ENCODE measurements at regions of chr6 and their contacts with region 1.

Region 1: DNA sequence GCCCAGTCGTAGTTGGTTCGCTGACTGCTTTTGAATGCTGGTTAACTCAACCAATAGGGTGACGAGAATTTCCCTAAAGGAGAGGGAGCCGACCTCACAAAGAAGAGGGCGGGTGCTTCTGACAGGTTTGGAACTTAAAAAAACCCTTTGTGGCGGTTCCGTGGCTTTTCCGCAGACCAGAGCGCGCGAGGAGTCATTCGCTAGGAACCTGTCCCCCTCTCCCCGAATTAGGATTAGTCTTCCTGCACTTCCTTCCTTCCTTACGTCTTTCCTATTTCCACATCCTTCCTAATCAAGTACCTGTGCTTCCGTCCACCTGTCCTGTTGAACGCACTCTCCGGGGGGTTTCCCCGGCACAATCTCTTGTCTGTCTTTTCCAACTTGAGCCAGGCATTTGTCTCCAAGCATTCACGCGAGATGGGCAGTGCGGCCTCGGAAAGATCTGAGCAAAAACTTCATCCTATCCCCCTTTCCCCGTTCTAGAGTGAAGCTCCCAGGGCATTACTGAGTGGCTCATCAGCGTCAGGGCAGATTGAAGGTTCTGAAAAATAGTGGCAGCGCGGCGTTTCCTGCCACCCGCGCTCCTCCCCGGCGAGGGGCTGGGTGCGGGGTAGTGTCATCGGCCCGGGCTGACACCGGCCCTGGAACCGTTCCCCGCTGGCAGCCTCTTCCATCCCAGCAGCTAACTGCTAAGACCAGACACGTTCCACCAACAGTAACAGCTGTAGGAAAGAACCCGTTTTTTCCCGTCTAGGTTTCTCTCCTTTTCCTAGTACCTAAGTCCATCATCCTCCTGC is 1.5 kb upstream of the STXBP5 start:
- DNase-seq: peak; percentile 87
- ATAC-seq: peak; percentile 88
- H3K4me3 Mint-ChIP-seq: peak overlapping the region; percentile 87
- H3K27ac Mint-ChIP-seq: peak overlapping the region; percentile 98
- H3K4me1 Mint-ChIP-seq: peaks cover 24% of the 10 kb centered on the region
- H3K27me3 Mint-ChIP-seq: no peaks in the 10 kb centered on the region

Region 2: DNA sequence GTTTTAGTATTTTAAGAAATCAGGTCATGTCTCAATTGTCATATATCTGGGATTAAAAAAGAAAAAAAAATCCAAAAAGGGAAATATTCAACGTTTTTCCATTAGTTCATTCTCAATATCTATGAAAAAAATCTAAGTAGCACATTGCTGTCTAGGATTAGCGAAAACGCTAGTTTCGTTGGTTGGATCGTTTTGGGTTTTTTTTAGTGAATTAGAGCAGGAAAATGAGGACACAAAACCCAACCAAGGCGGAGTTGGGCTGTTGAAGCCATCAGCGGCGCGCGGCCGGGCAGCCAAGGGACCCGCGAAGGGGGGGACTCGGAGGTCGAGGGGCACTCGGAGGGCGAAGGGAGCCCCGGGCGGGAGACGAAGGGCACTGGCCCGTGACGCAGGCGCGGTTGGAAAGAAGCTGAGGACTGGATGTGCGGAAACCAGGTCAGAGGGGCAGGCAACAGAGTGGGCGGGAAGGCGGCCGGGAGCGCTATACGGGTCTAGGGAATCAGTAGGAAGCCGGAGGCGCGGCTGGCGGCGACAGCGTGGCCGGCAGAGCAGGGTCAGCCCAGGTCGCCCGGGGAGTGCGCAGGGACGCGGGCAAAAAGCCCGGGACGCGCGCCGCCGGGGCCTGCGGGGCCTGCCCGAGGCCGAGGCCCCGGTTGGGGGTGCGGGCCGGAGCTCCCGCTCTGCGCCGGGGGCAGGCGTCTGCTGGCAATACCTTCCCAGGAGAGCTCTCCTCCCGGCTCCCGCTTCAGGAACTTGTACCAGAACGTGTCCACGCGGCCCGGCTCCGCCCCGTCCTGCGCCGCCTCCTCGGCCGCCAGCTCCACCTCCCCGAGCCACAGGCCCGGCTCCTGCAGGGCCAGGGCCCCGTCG is 1468.0 kb before region 1 on chr6:
- CTCF ChIA-PET with region 1: no interaction called
- POLR2A ChIA-PET with region 1: no interaction called
- intact Hi-C with region 1: loop called in 1 of 2 experiments (anchors 2 kb)
- DNase-seq: peak; percentile 82
- ATAC-seq: peak; percentile 70
- H3K4me3 Mint-ChIP-seq: peak overlapping the region; percentile 88
- H3K27ac Mint-ChIP-seq: peak overlapping the region; percentile 95
- H3K4me1 Mint-ChIP-seq: peaks cover 24% of the 10 kb centered on the region
- H3K27me3 Mint-ChIP-seq: no peaks in the 10 kb centered on the region

Region 3: DNA sequence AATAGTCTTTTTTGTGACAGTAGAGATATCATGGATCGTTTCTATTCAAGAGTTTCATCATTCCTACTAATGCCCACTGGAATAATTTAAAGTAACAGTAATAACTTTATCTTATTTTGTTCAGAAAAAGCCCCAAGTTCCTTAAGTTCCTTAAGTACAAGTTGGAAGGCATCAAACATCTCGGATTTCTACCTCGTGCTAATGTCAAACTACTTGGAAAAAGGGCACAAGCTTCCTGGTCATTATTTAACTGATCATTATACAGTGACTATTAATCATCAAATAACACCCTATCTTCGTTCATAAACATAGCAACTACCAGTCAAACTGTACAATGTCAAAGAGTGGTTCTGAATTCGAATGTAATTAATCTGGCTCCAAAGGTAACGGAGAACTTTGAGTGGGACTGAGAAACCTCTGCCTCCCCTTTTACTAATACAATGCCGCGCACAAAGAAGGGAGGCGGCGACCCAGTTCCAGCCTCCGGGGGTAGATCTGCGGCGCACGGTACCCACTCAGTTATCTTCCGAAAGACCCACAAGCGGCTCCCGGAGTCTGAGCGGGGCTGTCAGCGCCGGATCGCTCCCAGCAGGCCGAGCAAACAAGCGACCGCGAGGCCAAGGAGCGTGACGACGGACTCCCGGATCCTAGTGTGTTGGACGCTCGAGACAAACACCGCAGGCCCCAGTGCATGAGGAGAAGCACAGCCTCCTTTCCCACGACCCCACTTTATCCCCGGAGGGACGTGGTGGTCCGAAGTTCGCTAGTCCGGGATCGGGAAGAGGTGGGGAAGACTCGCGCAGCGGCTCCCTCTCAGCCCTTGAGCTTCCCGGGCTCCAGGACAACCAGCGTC is 1239.3 kb before region 1 on chr6:
- CTCF ChIA-PET with region 1: no interaction called
- POLR2A ChIA-PET with region 1: no interaction called
- intact Hi-C with region 1: loop called (anchors 2 to 5 kb)
- DNase-seq: peak; percentile 67
- ATAC-seq: peak; percentile 34
- H3K4me3 Mint-ChIP-seq: peak overlapping the region; percentile 94
- H3K27ac Mint-ChIP-seq: peak overlapping the region; percentile 88
- H3K4me1 Mint-ChIP-seq: peaks cover 44% of the 10 kb centered on the region
- H3K27me3 Mint-ChIP-seq: no peaks in the 10 kb centered on the region

Region 4: DNA sequence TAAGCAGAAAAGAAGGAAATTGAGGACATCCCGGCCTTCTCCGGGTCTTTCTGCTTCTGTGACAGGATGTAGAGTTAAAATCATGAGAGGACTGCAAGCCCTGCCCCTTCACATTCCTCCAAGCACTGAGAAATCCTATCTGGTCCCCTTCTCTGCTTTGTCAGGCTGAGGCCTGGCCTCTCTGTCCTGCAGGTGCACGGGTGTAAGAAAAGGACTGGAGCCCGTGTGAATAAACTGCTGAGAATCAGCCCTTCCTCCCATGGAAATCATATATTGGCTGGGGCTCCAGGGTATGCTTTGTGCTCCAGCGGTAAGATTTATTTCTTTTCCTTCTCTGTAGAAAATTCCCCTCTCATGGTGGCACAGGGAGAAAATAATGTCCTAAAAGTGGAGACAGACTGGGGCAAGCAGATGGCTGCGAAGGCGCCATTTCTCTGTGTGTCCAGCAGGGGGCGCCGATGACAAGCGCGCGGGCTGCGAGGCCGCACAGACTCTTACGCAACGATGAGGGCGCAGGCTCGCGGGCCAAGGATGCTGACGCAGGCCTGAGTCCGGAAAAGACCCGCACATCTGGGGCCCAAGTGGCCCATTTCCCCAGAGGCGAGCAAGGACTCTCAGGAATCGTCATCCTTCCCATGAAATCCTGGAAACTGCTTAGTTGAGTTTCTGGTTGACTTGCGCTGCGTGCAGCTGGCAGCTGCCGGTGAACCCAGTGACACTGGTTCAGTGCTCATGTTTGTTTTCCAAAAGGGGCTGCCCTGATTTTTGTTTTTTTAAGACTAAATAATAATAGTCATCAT is 345.3 kb before region 1 on chr6:
- CTCF ChIA-PET with region 1: interaction called, 3 read pairs
- POLR2A ChIA-PET with region 1: interaction called, 3 read pairs
- intact Hi-C with region 1: loop called (anchors 2 kb)
- DNase-seq: peak; percentile 89
- ATAC-seq: peak; percentile 56
- H3K4me3 Mint-ChIP-seq: peak overlapping the region; percentile 32
- H3K27ac Mint-ChIP-seq: peak overlapping the region; percentile 66
- H3K4me1 Mint-ChIP-seq: peaks cover 38% of the 10 kb centered on the region
- H3K27me3 Mint-ChIP-seq: peaks cover 2% of the 10 kb centered on the region

Region 5: GRCh38 chr6:146884728-146885127 is 318.0 kb before region 1 on chr6:
- CTCF ChIA-PET with region 1: no interaction called
- POLR2A ChIA-PET with region 1: no interaction called
- intact Hi-C with region 1: no loop called
- DNase-seq: no peak
- ATAC-seq: no peak
- H3K4me3 Mint-ChIP-seq: no peak overlapping the region
- H3K27ac Mint-ChIP-seq: no peak overlapping the region
- H3K4me1 Mint-ChIP-seq: no peaks in the 10 kb centered on the region
- H3K27me3 Mint-ChIP-seq: peaks cover 2% of the 10 kb centered on the region

Region 6: GRCh38 chr6:146931208-146931607 is 271.5 kb before region 1 on chr6:
- CTCF ChIA-PET with region 1: no interaction called
- POLR2A ChIA-PET with region 1: no interaction called
- intact Hi-C with region 1: no loop called
- DNase-seq: no peak
- ATAC-seq: no peak
- H3K4me3 Mint-ChIP-seq: no peak overlapping the region
- H3K27ac Mint-ChIP-seq: no peak overlapping the region
- H3K4me1 Mint-ChIP-seq: no peaks in the 10 kb centered on the region
- H3K27me3 Mint-ChIP-seq: no peaks in the 10 kb centered on the region

Region 7: DNA sequence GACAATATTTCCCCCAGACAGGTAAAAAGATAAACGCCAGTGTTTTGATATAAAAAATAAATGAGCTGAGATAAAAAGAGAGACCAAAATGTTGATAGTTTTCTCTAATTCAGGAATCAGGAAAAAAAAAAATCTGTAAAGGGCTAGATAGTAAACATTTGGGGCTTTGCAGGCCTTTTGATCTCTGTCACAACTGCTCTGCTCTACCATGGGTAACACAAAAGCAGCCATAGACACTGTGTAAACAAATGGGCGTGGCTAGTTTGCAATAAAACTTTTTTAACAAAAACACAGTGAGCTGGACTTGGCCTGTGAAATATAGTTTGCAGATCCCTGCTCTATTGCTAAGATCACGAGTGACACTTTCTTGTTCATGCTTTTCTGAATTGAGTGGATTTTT is 217.6 kb before region 1 on chr6:
- CTCF ChIA-PET with region 1: no interaction called
- POLR2A ChIA-PET with region 1: no interaction called
- intact Hi-C with region 1: no loop called
- DNase-seq: no peak
- ATAC-seq: no peak
- H3K4me3 Mint-ChIP-seq: no peak overlapping the region
- H3K27ac Mint-ChIP-seq: no peak overlapping the region
- H3K4me1 Mint-ChIP-seq: no peaks in the 10 kb centered on the region
- H3K27me3 Mint-ChIP-seq: no peaks in the 10 kb centered on the region

Region 8: DNA sequence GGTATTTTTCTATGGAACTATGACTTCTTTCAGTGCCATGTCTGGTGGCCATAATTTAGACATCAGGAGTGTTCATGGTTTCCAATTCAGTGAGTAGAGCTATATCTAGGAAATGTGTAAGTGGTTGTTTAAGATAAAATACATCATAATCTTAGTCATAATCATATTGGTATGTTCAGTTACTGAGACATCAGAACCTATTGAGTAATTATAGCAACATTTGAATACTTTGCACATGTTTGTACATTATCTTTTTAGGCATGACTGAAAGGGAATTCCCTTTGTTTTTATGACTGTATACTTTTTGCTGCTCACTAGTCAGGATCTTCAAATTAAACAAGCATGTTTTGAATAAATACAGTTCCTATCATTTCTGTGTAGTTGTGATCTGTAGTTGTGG is 65.5 kb after region 1 on chr6:
- CTCF ChIA-PET with region 1: no interaction called
- POLR2A ChIA-PET with region 1: no interaction called
- intact Hi-C with region 1: loop called in 1 of 2 experiments (anchors 5 kb)
- DNase-seq: no peak
- ATAC-seq: peak; percentile 92
- H3K4me3 Mint-ChIP-seq: no peak overlapping the region
- H3K27ac Mint-ChIP-seq: peak overlapping the region; percentile 79
- H3K4me1 Mint-ChIP-seq: peaks cover 17% of the 10 kb centered on the region
- H3K27me3 Mint-ChIP-seq: no peaks in the 10 kb centered on the region

Region 9: GRCh38 chr6:147322299-147323162 is 119.8 kb after region 1 on chr6:
- CTCF ChIA-PET with region 1: no interaction called
- POLR2A ChIA-PET with region 1: no interaction called
- intact Hi-C with region 1: loop called (anchors 2 to 5 kb)
- DNase-seq: peak; percentile 32
- ATAC-seq: peak; percentile 94
- H3K4me3 Mint-ChIP-seq: peak overlapping the region; percentile 51
- H3K27ac Mint-ChIP-seq: peak overlapping the region; percentile 91
- H3K4me1 Mint-ChIP-seq: peaks cover 19% of the 10 kb centered on the region
- H3K27me3 Mint-ChIP-seq: no peaks in the 10 kb centered on the region

Measured in activated CD4-positive, alpha-beta T cell treated with anti-CD3 and anti-CD28 coated beads for 36 hours (primary cell).